Right ventricle myocardium inferior (tissue), 1 donor: ENCODE measurements at regions of chr5 and their contacts with region 1.

Region 1: GRCh38 chr5:16140944-16141343 is 38.6 kb downstream of the MARCHF11 start:
- DNase-seq: no peak
- ATAC-seq: no peak

Region 2: DNA sequence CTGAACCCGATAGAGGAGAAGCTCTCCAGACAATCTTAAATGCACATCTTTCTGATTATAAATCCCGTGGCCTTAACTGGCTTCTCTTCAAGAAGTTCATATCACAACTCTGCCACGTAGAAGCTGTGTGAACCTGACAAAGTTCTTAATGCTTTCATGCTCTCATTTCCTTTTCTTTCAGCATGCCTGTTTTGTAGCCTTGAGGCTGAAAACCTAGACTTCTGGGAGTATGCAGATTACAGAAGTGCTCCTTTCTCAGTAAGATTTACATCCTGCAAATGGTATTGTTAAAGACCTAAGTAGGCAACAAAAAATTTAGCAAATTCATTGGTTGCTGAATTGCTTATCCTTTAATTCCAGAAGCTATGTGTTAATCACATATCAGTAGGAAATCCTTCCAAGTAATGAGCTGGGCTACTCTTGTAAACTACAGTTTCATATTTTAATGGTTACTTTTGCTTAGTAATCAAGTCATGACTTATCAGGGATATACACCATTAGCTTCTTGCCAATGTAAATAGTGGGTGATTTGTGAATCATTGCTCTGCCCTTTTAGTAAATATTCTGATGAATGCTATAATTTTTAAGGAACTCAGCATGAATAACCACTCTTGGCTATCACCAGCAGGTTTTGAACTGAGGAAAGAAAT is 306.2 kb before region 1 on chr5:
- intact Hi-C with region 1: loop called (anchors 10 kb)
- DNase-seq: no peak
- ATAC-seq: no peak